Cardiac septum (tissue), 1 donor: ENCODE measurements at regions of chr15 and their contacts with region 1.

Region 1: GRCh38 chr15:81098861-81099651 is 35.0 kb upstream of the CFAP161 start:
- DNase-seq: peak; percentile 80

Region 2: GRCh38 chr15:81002251-81003022 is 96.6 kb before region 1 on chr15:
- intact Hi-C with region 1: loop called (anchors 1 kb)
- DNase-seq: no peak

Region 3: DNA sequence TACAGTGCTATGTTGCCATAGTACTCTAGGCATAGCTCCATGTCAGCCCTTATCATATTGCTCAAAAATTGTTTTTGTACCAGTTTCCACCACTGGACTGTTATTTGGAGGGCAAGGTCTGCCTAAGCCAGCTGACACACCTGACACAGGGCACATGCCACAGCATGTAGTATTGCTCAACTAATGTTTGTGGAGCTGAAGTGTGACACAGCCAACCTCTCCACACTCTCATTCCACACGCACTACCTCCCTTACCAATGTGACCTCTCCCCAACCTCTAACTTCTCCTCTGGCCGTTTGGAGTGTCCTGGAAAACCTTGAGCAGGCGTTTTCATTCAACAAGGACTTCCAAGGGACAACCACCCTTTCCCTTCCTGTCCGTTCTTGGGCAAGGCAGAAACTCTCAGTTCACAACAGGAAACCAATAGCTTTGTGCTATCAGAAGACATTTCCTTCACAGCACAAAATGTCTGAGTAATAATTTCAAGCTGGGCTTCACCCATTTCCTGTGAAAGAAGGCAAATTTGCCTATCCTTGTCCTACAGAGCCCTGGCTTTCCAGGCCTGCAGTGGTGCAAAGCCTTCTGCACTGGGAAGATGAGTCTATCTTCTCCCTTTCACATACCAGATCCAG is 60.0 kb before region 1 on chr15:
- intact Hi-C with region 1: loop called (anchors 2 kb)
- DNase-seq: no peak

Region 4: GRCh38 chr15:81211376-81211775 is 112.3 kb after region 1 on chr15:
- intact Hi-C with region 1: no loop called
- DNase-seq: no peak